IMR-90 (cell line): ENCODE measurements at regions of chr11 and their contacts with region 1.

Region 1: GRCh38 chr11:10735481-10736475 is 15.3 kb upstream of the CTR9 start:
- DNase-seq: peak; percentile 96
- ATAC-seq: peak; percentile 97
- H3K4me3 ChIP-seq: peak overlapping the region; percentile 40; the same call in 1 of the 2 replicates
- H3K27ac ChIP-seq: peak overlapping the region; percentile 93
- H3K4me1 ChIP-seq: peaks cover 8% of the 10 kb centered on the region
- H3K27me3 ChIP-seq: no peaks in the 10 kb centered on the region
- CTCF ChIP-seq: peak; percentile 99
- POLR2A ChIP-seq: no peak; the same call in 1 of the 2 replicates
- RAD21 ChIP-seq: peak; percentile 99

Region 2: GRCh38 chr11:9757809-9758636 is 977.8 kb before region 1 on chr11:
- CTCF ChIA-PET with region 1: no interaction called
- POLR2A ChIA-PET with region 1: no interaction called
- dilution Hi-C with region 1: no loop called
- in situ Hi-C with region 1: loop called (anchors 10 kb)
- intact Hi-C with region 1: loop called (anchors 5 kb)
- DNase-seq: peak; percentile 72
- ATAC-seq: peak; percentile 43
- H3K4me3 ChIP-seq: peak overlapping the region; percentile 32
- H3K27ac ChIP-seq: peak overlapping the region; percentile 96
- H3K4me1 ChIP-seq: peaks cover 48% of the 10 kb centered on the region
- H3K27me3 ChIP-seq: no peaks in the 10 kb centered on the region
- CTCF ChIP-seq: peak; percentile 86
- POLR2A ChIP-seq: no peak
- RAD21 ChIP-seq: peak; percentile 86

Region 3: DNA sequence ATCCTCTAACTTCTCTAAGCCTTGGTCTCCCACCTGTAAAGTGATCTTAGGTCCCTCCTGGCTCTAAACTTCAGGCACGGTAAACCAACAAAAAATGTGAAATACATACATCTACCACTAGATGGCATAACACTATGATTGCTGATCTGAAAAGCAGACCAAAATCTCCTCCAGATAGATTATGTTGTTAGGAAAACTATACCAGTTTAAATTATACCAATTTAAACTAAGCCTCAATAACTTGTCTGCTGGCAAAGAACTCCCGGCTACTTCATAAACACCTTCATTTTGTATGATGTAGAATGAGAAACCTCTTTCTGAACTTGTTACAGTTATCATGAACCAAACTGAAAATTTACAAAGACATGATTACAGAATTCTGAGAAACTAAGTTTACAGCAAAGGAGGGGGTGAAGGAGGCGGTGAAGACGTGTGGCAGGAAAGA is 527.6 kb before region 1 on chr11:
- CTCF ChIA-PET with region 1: no interaction called
- POLR2A ChIA-PET with region 1: no interaction called
- dilution Hi-C with region 1: no loop called
- in situ Hi-C with region 1: loop called (anchors 25 kb)
- intact Hi-C with region 1: no loop called
- DNase-seq: peak; percentile 64
- ATAC-seq: peak; percentile 77
- H3K4me3 ChIP-seq: peak overlapping the region; percentile 7; the same call in 1 of the 2 replicates
- H3K27ac ChIP-seq: peak overlapping the region; percentile 67
- H3K4me1 ChIP-seq: peaks cover 7% of the 10 kb centered on the region
- H3K27me3 ChIP-seq: no peaks in the 10 kb centered on the region
- CTCF ChIP-seq: peak; percentile 61
- POLR2A ChIP-seq: no peak
- RAD21 ChIP-seq: peak; percentile 64

Region 4: DNA sequence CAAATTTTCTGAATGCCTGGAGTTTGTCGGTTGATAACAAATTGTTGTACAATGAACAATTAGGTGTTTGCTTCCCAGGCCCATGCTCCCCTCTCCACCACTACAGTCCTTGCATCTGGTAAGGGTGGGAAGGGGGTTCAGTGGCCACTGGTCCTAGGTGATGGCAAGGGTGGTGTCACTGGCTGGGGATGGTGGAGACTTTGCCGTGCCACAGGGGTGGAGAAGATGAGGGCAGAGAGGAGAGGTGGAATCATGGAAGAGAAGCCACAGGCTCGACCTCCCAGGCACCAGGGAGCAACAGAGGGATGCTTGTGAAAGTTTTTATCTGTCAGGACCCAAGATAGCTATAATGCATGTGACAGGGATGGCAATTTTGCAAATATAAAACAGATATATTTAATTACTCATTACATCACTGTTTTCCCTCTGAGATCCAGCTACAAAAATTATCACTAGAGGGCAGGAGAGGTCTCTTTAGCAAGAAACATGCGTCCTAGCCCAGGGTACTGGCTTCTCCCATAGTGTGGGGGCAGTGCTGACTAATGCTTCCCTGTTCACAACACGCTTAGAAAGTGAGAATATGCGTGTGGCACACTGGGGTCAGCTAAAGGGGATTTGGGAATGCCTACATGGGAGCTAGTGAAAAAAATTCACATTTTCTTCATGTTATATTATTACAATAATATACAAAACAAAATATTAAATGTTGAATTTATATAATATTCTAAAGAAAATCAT is 329.8 kb before region 1 on chr11:
- CTCF ChIA-PET with region 1: interaction called, 8 read pairs
- POLR2A ChIA-PET with region 1: no interaction called
- dilution Hi-C with region 1: no loop called
- in situ Hi-C with region 1: loop called (anchors 5 kb)
- intact Hi-C with region 1: loop called (anchors 1 kb)
- DNase-seq: peak; percentile 92
- ATAC-seq: peak; percentile 88
- H3K4me3 ChIP-seq: no peak overlapping the region
- H3K27ac ChIP-seq: peak overlapping the region; percentile 23; the same call in 1 of the 2 replicates
- H3K4me1 ChIP-seq: peaks cover 14% of the 10 kb centered on the region
- H3K27me3 ChIP-seq: no peaks in the 10 kb centered on the region
- CTCF ChIP-seq: peak; percentile 95
- POLR2A ChIP-seq: no peak
- RAD21 ChIP-seq: peak; percentile 93

Region 5: DNA sequence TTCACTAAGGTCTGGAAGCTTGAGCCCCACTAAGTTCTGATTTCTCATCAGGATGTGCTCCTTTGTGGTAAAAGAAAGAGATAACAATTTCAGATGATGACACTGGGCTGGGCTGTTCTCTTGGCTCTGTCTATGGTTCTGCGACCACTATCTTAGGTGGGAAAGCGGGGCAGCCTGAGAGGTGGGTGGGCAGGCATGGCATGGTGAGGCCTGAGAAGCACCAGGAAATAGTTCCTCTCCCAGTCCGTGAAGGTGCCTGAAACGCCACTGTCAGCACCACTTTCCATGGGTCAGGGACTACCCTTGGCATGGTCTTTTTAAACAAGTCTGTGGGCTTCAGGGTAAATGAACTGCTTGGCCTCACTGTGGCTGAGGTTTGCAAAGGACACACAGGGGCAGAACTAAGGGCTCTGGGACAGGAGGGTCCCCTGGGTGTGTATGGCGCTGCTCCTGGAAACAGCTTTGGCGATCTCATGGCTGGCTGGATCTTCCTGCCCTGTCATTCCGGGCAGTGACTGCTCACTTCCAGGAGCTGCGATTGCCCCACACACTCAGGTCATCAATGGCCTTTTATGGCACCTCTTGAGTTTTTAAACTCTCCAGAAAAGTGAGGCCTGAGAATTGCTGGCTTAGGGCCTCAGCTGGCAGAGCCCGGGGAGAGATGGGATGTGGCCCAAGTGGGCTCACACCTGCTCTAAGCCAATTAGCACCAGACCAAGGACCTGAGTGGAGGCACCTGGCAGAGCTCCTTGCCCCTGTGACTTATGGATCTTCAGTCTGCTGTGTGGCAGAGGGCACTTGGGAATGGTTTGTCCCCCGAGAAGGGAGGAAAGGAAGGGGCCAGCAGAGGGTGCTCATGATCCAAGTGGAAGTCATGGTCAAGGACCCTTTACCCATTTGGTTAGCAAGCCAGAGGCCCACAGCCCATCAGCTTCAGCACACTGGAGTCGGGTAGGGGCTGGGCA is 111.7 kb before region 1 on chr11:
- CTCF ChIA-PET with region 1: no interaction called
- POLR2A ChIA-PET with region 1: no interaction called
- dilution Hi-C with region 1: no loop called
- in situ Hi-C with region 1: no loop called
- intact Hi-C with region 1: loop called (anchors 1 kb)
- DNase-seq: peak; percentile 37
- ATAC-seq: peak; percentile 68
- H3K4me3 ChIP-seq: no peak overlapping the region
- H3K27ac ChIP-seq: no peak overlapping the region
- H3K4me1 ChIP-seq: peaks cover 4% of the 10 kb centered on the region
- H3K27me3 ChIP-seq: no peaks in the 10 kb centered on the region
- CTCF ChIP-seq: peak; percentile 54
- POLR2A ChIP-seq: no peak
- RAD21 ChIP-seq: peak; percentile 67

Region 6: DNA sequence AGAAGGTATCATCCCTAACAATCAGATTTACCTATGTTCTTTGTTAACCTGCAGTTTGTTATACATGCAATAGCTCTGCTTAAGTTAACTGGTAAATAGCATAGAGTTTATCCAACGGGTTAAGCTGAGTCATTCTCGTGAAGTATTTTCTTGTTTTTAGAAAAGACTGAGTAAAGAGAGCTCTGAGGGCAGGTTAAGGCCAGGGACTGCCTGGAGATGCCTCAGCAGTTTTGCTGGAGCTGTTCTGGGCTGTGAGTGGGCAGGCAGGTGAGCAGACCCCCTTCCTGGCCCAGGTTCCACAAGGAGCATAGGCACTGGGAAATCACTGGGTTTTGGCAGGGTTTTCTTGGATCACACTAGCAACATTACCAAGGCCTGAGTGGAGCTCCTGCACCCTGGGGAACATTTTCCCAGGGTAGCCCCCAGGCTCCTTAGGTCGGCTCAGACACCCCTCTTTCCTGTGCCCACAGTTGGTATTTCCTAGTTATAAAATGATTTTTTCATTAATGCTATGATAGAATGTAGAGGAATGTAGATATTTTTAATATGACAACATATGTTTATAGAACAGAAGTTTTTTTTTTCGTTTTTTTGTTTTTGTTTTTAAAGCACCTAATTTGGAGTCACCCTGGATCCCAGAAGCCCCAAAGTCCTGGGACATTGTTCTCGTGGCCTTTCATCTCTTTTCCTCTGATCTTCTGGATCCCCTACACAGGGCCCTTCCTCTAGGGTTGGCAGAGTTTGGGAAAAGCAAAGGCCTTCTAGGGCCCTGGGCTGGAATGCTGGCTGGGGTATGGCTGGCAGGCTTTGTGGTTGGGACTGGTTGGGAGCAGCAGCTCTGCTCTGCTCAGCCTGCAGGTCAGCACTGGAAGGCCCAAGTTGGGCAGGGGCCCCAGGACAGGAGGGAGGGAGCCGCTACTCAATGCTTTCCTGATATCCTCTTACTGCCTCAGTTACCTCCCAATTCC is 68.9 kb before region 1 on chr11:
- CTCF ChIA-PET with region 1: no interaction called
- POLR2A ChIA-PET with region 1: no interaction called
- dilution Hi-C with region 1: no loop called
- in situ Hi-C with region 1: no loop called
- intact Hi-C with region 1: loop called (anchors 2 kb)
- DNase-seq: peak; percentile 74
- ATAC-seq: peak; percentile 69
- H3K4me3 ChIP-seq: no peak overlapping the region
- H3K27ac ChIP-seq: peak overlapping the region; percentile 89
- H3K4me1 ChIP-seq: peaks cover 30% of the 10 kb centered on the region
- H3K27me3 ChIP-seq: no peaks in the 10 kb centered on the region
- CTCF ChIP-seq: no peak
- POLR2A ChIP-seq: no peak
- RAD21 ChIP-seq: no peak

Region 7: DNA sequence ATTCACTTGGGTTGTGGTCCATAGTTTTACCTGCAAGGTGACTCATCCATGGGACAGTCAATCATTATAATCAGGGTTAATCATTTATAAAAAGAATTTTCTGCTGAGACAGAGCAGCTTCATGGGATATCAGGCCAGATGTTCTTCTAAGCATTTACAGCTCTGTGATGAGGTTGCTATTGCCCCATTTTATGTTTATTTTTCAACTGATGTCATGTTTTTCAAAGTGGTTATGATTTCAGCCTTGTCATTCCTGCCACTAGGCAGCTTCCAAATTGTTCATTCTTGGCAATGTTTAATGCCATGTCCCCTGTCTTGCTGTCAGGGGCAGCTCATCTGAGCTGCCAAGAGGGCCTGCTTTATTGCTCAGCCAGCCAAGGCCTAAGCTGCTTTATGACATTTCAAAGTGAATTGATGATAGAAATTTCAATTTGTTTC is 158.0 kb after region 1 on chr11:
- CTCF ChIA-PET with region 1: no interaction called
- POLR2A ChIA-PET with region 1: no interaction called
- dilution Hi-C with region 1: no loop called
- in situ Hi-C with region 1: no loop called
- intact Hi-C with region 1: no loop called
- DNase-seq: peak; percentile 89
- ATAC-seq: peak; percentile 79
- H3K4me3 ChIP-seq: no peak overlapping the region
- H3K27ac ChIP-seq: peak overlapping the region; percentile 51; the same call in 1 of the 2 replicates
- H3K4me1 ChIP-seq: peaks cover 22% of the 10 kb centered on the region
- H3K27me3 ChIP-seq: no peaks in the 10 kb centered on the region
- CTCF ChIP-seq: peak; percentile 69
- POLR2A ChIP-seq: no peak
- RAD21 ChIP-seq: peak; percentile 23; the same call in 1 of the 2 replicates